Prostate gland (tissue), 2 donors: ENCODE measurements at regions of chr19 and their contacts with region 1.

Region 1: DNA sequence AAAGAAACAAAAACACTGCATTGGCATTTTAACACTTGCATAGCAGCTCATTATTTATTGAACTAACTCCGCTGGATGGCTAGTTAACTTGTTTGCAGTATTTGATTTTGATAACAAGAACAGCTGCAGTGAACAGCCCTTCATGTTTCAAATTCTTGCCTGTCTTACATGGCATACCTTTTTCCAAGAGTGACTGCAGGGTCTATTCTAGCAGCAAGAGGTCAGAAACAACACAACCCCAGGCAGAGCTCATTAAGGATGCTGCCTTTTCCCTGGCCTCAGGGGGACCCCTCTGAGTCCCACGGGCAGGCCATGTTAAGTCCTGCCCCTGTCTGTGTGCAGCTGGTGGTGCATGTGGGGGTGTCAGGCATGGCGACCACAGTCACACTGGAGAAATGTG is 16.6 kb downstream of the PGPEP1 start:
- DNase-seq: no peak
- H3K4me3 ChIP-seq: no peak overlapping the region
- H3K27ac ChIP-seq: no peak overlapping the region
- H3K4me1 ChIP-seq: peaks cover 8% of the 10 kb centered on the region
- H3K27me3 ChIP-seq: no peaks in the 10 kb centered on the region
- CTCF ChIP-seq: no peak
- POLR2A ChIP-seq: no peak

Region 2: DNA sequence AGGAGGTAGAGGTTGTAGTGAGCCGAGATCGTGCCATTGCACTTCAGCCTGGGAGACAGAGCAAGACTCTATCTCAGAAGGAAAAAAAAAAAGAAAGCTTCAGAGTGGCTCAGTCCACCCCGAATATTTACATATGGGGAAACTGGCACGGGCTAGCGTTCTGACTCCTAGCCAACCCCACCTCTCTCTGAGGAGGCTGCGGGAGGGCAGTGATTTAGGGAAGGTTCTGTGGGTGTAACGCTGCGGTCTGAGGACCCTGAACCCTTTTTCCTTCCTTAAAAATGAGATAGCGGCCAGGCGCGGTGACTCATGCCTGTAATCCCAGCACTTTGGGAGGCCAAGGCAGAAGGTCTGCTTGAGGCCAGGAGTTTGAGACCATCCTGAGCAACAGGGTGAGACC is 35.4 kb after region 1 on chr19:
- intact Hi-C with region 1: loop called (anchors 5 kb)
- DNase-seq: peak; percentile 43
- H3K4me3 ChIP-seq: no peak overlapping the region
- H3K27ac ChIP-seq: no peak overlapping the region
- H3K4me1 ChIP-seq: peaks cover 3% of the 10 kb centered on the region
- H3K27me3 ChIP-seq: no peaks in the 10 kb centered on the region
- CTCF ChIP-seq: no peak
- POLR2A ChIP-seq: no peak

Region 3: GRCh38 chr19:18469069-18469846 is 112.2 kb after region 1 on chr19:
- intact Hi-C with region 1: no loop called
- DNase-seq: no peak
- H3K4me3 ChIP-seq: no peak overlapping the region
- H3K27ac ChIP-seq: no peak overlapping the region
- H3K4me1 ChIP-seq: peaks cover 11% of the 10 kb centered on the region
- H3K27me3 ChIP-seq: no peaks in the 10 kb centered on the region
- CTCF ChIP-seq: peak; percentile 41 to 69 (median 64)
- POLR2A ChIP-seq: no peak